GM12878 (cell line): ENCODE measurements at regions of chr5 and their contacts with region 1.

Region 1: GRCh38 chr5:131224387-131225201 is 39.3 kb upstream of the CDC42SE2 start:
- DNase-seq: peak; percentile 96
- ATAC-seq: peak; percentile 82
- H3K4me3 ChIP-seq: peak overlapping the region; percentile 64
- H3K27ac ChIP-seq: peak overlapping the region; percentile 78
- H3K4me1 ChIP-seq: peaks cover 30% of the 10 kb centered on the region
- H3K27me3 ChIP-seq: no peaks in the 10 kb centered on the region
- CTCF ChIP-seq: no peak
- EP300 ChIP-seq: peak; percentile 94 to 96
- POLR2A ChIP-seq: peak; percentile 75
- RAD21 ChIP-seq: no peak; the same call in 1 of the 2 replicates

Region 2: DNA sequence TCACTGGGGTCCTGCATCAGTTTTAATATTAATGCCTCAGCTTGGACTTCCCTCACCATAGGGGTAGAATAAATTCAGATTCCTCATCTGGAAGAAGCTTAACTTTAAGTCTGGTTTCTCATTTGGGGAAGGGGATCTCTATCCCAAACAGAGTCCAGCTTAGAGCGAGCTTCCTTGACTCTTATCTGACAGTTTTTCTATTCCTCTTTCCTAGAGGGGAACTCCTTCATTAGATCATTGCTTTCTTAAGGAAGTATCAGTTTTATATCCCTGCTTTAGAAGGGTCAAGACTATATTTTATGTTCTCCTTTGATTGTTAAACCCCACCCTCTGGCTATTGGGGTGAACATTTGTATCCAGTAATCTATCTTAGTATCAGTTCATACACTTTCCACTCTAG is 15.1 kb after region 1 on chr5:
- CTCF ChIA-PET with region 1: interaction called, 7 read pairs
- POLR2A ChIA-PET with region 1: interaction called, 3 read pairs
- RAD21 ChIA-PET with region 1: interaction called, 8 read pairs
- SMC1A ChIA-PET with region 1: interaction called, 1,218 read pairs
- in situ Hi-C with region 1: no loop called
- intact Hi-C with region 1: no loop called
- DNase-seq: no peak
- ATAC-seq: no peak
- H3K4me3 ChIP-seq: no peak overlapping the region
- H3K27ac ChIP-seq: no peak overlapping the region
- H3K4me1 ChIP-seq: no peaks in the 10 kb centered on the region
- H3K27me3 ChIP-seq: no peaks in the 10 kb centered on the region
- CTCF ChIP-seq: no peak
- EP300 ChIP-seq: no peak
- POLR2A ChIP-seq: no peak
- RAD21 ChIP-seq: no peak

Region 3: GRCh38 chr5:131252824-131253171 is 28.2 kb after region 1 on chr5:
- CTCF ChIA-PET with region 1: interaction called, 65 read pairs
- POLR2A ChIA-PET with region 1: interaction called, 141 read pairs
- RAD21 ChIA-PET with region 1: interaction called, 161 read pairs
- SMC1A ChIA-PET with region 1: interaction called, 1,218 read pairs
- in situ Hi-C with region 1: no loop called
- intact Hi-C with region 1: loop called (anchors 2 kb)
- DNase-seq: peak; percentile 81
- ATAC-seq: peak; percentile 79
- H3K4me3 ChIP-seq: peak overlapping the region; percentile 38; the same call in 1 of the 2 replicates
- H3K27ac ChIP-seq: peak overlapping the region; percentile 80
- H3K4me1 ChIP-seq: peaks cover 46% of the 10 kb centered on the region
- H3K27me3 ChIP-seq: no peaks in the 10 kb centered on the region
- CTCF ChIP-seq: no peak
- EP300 ChIP-seq: 0 out of 4 replicates have a peak, but pooled peaks of 1 of the 2 experiments have one; percentile 30
- POLR2A ChIP-seq: peak; percentile 72
- RAD21 ChIP-seq: 0 out of 2 replicates have a peak, but pooled peaks have one; percentile 14

Region 4: DNA sequence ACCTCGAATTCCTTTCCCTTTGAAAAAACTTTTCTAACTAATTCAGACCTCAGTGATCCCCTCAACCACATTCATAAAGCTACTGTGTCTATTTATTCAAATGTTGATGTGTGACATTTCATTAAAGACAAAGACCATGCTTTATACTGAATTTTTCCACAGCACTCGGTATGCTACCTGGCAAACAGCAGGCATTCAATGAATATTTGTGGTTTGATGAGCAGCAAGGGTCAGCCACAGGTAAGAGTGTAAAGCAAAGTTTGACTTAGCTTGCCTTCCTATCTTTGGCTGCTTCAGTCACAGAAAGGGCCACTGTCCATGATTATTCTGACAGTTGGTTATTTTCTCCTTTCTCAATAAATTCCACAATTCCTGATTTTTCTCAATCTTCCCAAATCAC is 34.1 kb after region 1 on chr5:
- CTCF ChIA-PET with region 1: interaction called, 65 read pairs
- POLR2A ChIA-PET with region 1: interaction called, 309 read pairs
- RAD21 ChIA-PET with region 1: interaction called, 161 read pairs
- SMC1A ChIA-PET with region 1: interaction called, 1,218 read pairs
- in situ Hi-C with region 1: no loop called
- intact Hi-C with region 1: loop called (anchors 1 kb)
- DNase-seq: no peak
- ATAC-seq: no peak
- H3K4me3 ChIP-seq: no peak overlapping the region
- H3K27ac ChIP-seq: peak overlapping the region; percentile 35
- H3K4me1 ChIP-seq: peaks cover 24% of the 10 kb centered on the region
- H3K27me3 ChIP-seq: no peaks in the 10 kb centered on the region
- CTCF ChIP-seq: no peak
- EP300 ChIP-seq: no peak
- POLR2A ChIP-seq: no peak
- RAD21 ChIP-seq: no peak

Region 5: GRCh38 chr5:131270809-131271208 is 46.2 kb after region 1 on chr5:
- CTCF ChIA-PET with region 1: interaction called, 65 read pairs
- POLR2A ChIA-PET with region 1: interaction called, 309 read pairs
- RAD21 ChIA-PET with region 1: interaction called, 137 read pairs
- SMC1A ChIA-PET with region 1: interaction called, 1,218 read pairs
- in situ Hi-C with region 1: no loop called
- intact Hi-C with region 1: no loop called
- DNase-seq: no peak
- ATAC-seq: no peak
- H3K4me3 ChIP-seq: peak overlapping the region; percentile 70
- H3K27ac ChIP-seq: peak overlapping the region; percentile 71
- H3K4me1 ChIP-seq: peaks cover 31% of the 10 kb centered on the region
- H3K27me3 ChIP-seq: no peaks in the 10 kb centered on the region
- CTCF ChIP-seq: no peak
- EP300 ChIP-seq: no peak
- POLR2A ChIP-seq: no peak
- RAD21 ChIP-seq: no peak

Region 6: GRCh38 chr5:131316026-131316425 is 91.4 kb after region 1 on chr5:
- CTCF ChIA-PET with region 1: no interaction called
- POLR2A ChIA-PET with region 1: no interaction called
- RAD21 ChIA-PET with region 1: no interaction called
- SMC1A ChIA-PET with region 1: no interaction called
- in situ Hi-C with region 1: no loop called
- intact Hi-C with region 1: no loop called
- DNase-seq: no peak
- ATAC-seq: no peak
- H3K4me3 ChIP-seq: no peak overlapping the region
- H3K27ac ChIP-seq: no peak overlapping the region
- H3K4me1 ChIP-seq: no peaks in the 10 kb centered on the region
- H3K27me3 ChIP-seq: no peaks in the 10 kb centered on the region
- CTCF ChIP-seq: no peak
- EP300 ChIP-seq: no peak
- POLR2A ChIP-seq: no peak
- RAD21 ChIP-seq: no peak

Region 7: GRCh38 chr5:131364507-131365050 is 140.0 kb after region 1 on chr5:
- CTCF ChIA-PET with region 1: no interaction called
- POLR2A ChIA-PET with region 1: no interaction called
- RAD21 ChIA-PET with region 1: no interaction called
- SMC1A ChIA-PET with region 1: no interaction called
- in situ Hi-C with region 1: no loop called
- intact Hi-C with region 1: no loop called
- DNase-seq: no peak
- ATAC-seq: no peak
- H3K4me3 ChIP-seq: no peak overlapping the region
- H3K27ac ChIP-seq: no peak overlapping the region
- H3K4me1 ChIP-seq: no peaks in the 10 kb centered on the region
- H3K27me3 ChIP-seq: no peaks in the 10 kb centered on the region
- CTCF ChIP-seq: no peak
- EP300 ChIP-seq: no peak
- POLR2A ChIP-seq: no peak
- RAD21 ChIP-seq: no peak